Esophagus muscularis mucosa (tissue), 4 donors: ENCODE measurements at regions of chr17 and their contacts with region 1.

Region 1: GRCh38 chr17:14069251-14070021 is at the start of gene COX10:
- DNase-seq: peak; percentile 97
- H3K4me3 ChIP-seq: peak within 1 kb of the TSS; percentile 90 to 99 (median 94)
- H3K27ac ChIP-seq: peak within 1 kb of the TSS; percentile 79 to 85 (median 82)
- H3K4me1 ChIP-seq: peaks cover 22 to 32% (median 28%) of the 10 kb centered on the region in 4 donors
- H3K27me3 ChIP-seq: no peaks in the 10 kb centered on the region
- CTCF ChIP-seq: no peak
- EP300 ChIP-seq: no peak
- POLR2A ChIP-seq: peak; percentile 44
- total RNA-seq, gene COX10: 20.3 to 27.2 (median 22.0) TPM

Region 2: GRCh38 chr17:13594762-13595598 is 474.5 kb before region 1 on chr17:
- intact Hi-C with region 1: loop called (anchors 10 kb)
- DNase-seq: no peak
- H3K4me3 ChIP-seq: no peak overlapping the region
- H3K27ac ChIP-seq: peak overlapping the region in 3 of 4 donors; percentile 1 to 37 (median 35)
- H3K4me1 ChIP-seq: peaks cover 0 to 4% (median 0%) of the 10 kb centered on the region in 4 donors
- H3K27me3 ChIP-seq: peaks cover 0 to 50% (median 5%) of the 10 kb centered on the region in 4 donors
- CTCF ChIP-seq: peak; percentile 80 to 92 (median 91)
- EP300 ChIP-seq: no peak
- POLR2A ChIP-seq: no peak

Region 3: GRCh38 chr17:13888056-13888609 is 181.3 kb before region 1 on chr17:
- intact Hi-C with region 1: loop called (anchors 10 kb)
- DNase-seq: no peak
- H3K4me3 ChIP-seq: no peak overlapping the region
- H3K27ac ChIP-seq: peak overlapping the region; percentile 58 to 73 (median 66)
- H3K4me1 ChIP-seq: peaks cover 3 to 57% (median 43%) of the 10 kb centered on the region in 4 donors
- H3K27me3 ChIP-seq: no peaks in the 10 kb centered on the region
- CTCF ChIP-seq: no peak
- EP300 ChIP-seq: no peak
- POLR2A ChIP-seq: no peak

Region 4: DNA sequence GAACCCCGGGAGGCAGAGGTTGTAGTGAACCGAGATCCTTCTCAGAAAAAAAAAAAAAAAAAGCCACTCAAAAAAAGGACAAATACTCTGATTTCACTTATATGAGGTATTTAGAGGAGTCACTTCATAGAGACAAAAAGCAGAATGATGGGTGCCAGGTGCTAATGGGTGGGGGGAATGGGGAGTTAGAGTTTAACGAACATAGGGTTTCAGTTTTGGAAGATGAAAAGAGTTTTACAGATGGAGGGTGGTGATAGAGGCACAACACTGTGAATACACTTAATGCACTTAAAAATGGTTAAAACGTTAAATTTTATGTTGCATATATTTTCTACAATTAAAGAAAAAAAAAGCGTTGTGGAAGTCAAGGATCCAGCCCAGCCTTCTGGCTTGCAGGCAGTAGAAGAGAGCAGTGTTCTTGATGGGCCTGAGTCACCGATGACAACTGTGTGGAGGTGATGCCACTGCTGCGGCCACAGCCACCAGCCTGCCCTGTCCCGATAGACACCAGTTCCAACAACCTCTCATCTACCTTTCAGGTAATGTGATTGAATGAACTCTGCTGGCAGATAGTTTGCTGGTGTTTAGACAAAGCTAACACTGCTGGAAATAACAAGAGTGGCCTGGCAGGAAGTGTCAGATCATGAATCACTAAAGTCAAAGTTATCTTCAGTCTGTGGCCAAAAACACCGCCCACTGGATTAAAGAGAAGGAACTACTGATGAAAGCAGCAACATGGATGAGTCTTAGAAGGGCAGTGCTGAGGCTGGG is 50.1 kb before region 1 on chr17:
- intact Hi-C with region 1: no loop called
- DNase-seq: peak; percentile 78
- H3K4me3 ChIP-seq: no peak overlapping the region
- H3K27ac ChIP-seq: no peak overlapping the region
- H3K4me1 ChIP-seq: peaks cover 0 to 7% (median 0%) of the 10 kb centered on the region in 4 donors
- H3K27me3 ChIP-seq: peaks cover 0 to 16% (median 0%) of the 10 kb centered on the region in 4 donors
- CTCF ChIP-seq: no peak
- EP300 ChIP-seq: no peak
- POLR2A ChIP-seq: no peak

Region 5: GRCh38 chr17:14033166-14033565 is 36.3 kb before region 1 on chr17:
- intact Hi-C with region 1: no loop called
- DNase-seq: no peak
- H3K4me3 ChIP-seq: no peak overlapping the region
- H3K27ac ChIP-seq: no peak overlapping the region
- H3K4me1 ChIP-seq: peaks cover 0 to 8% (median 5%) of the 10 kb centered on the region in 4 donors
- H3K27me3 ChIP-seq: no peaks in the 10 kb centered on the region
- CTCF ChIP-seq: no peak
- EP300 ChIP-seq: no peak
- POLR2A ChIP-seq: no peak